ENCODE measurements at regions of chr1 and their contacts with region 1.

Region 1: GRCh38 chr1:203166566-203166940 is 9.1 kb downstream of the MYBPH start:
- DNase-seq: no peak
- ATAC-seq: peak; percentile 34
- H3K4me3 Mint-ChIP-seq: no peak overlapping the region
- H3K27ac Mint-ChIP-seq: no peak overlapping the region
- H3K4me1 Mint-ChIP-seq: peaks cover 3% of the 10 kb centered on the region
- H3K27me3 Mint-ChIP-seq: peaks cover 25% of the 10 kb centered on the region
- CTCF ChIP-seq: no peak

Region 2: GRCh38 chr1:203216274-203217138 is 50.0 kb after region 1 on chr1:
- CTCF ChIA-PET with region 1: interaction called, 7 read pairs
- POLR2A ChIA-PET with region 1: no interaction called
- intact Hi-C with region 1: loop called (anchors 1 kb)
- DNase-seq: no peak
- ATAC-seq: no peak
- H3K4me3 Mint-ChIP-seq: no peak overlapping the region
- H3K27ac Mint-ChIP-seq: no peak overlapping the region
- H3K4me1 Mint-ChIP-seq: peaks cover 4% of the 10 kb centered on the region
- H3K27me3 Mint-ChIP-seq: peaks cover 15% of the 10 kb centered on the region
- CTCF ChIP-seq: peak; percentile 42

Region 3: GRCh38 chr1:203408486-203409427 is 242.2 kb after region 1 on chr1:
- CTCF ChIA-PET with region 1: no interaction called
- POLR2A ChIA-PET with region 1: no interaction called
- intact Hi-C with region 1: no loop called
- DNase-seq: no peak
- ATAC-seq: no peak
- H3K4me3 Mint-ChIP-seq: no peak overlapping the region
- H3K27ac Mint-ChIP-seq: no peak overlapping the region
- H3K4me1 Mint-ChIP-seq: peaks cover 21% of the 10 kb centered on the region
- H3K27me3 Mint-ChIP-seq: peaks cover 10% of the 10 kb centered on the region
- CTCF ChIP-seq: no peak

Measured in activated B cell treated with CpG ODN at 0.5 μM for 24 hours (primary cell).